ENCODE measurements at regions of chr6 and their contacts with region 1.

Region 1: GRCh38 chr6:138115877-138116660 is 8.8 kb upstream of the PERP start:
- DNase-seq: no peak
- ATAC-seq: peak; percentile 93
- H3K4me3 ChIP-seq: no peak overlapping the region
- H3K27ac ChIP-seq: no peak overlapping the region
- H3K4me1 ChIP-seq: no peaks in the 10 kb centered on the region
- H3K27me3 ChIP-seq: peaks cover 2% of the 10 kb centered on the region; the same call in 1 of the 2 replicates
- CTCF ChIP-seq: peak; percentile 78

Region 2: DNA sequence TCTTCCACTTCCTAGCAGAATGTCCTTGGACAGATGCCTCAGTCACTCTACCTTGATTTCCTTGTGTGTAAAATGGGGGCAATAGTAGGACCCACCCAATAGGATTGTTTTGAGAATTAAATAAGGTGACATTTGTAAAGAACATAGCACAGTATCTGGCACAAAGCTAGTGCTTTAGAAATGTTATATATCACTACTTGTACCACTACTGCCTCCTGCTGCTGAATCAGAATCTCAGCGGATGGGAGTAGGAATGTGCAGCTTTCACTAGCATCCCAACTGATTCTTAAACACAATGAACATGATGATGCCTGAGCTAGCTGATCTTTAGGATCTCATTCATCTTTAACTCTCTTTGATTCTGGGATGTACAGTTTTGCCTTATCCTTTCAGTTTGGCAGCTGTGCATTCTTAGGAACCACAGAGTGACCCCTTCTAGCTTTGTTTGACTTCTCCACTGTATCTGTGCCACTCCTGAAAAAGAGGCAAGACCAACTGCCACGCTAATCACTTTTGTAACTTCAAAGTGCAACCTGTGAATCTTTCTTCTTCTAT is 95.0 kb after region 1 on chr6:
- CTCF ChIA-PET with region 1: no interaction called
- POLR2A ChIA-PET with region 1: no interaction called
- in situ Hi-C with region 1: no loop called
- intact Hi-C with region 1: loop called (anchors 5 kb)
- DNase-seq: no peak
- ATAC-seq: no peak
- H3K4me3 ChIP-seq: no peak overlapping the region
- H3K27ac ChIP-seq: no peak overlapping the region
- H3K4me1 ChIP-seq: no peaks in the 10 kb centered on the region
- H3K27me3 ChIP-seq: 0 out of 2 replicates have a peak, but pooled peaks cover 3% of the 10 kb centered on the region
- CTCF ChIP-seq: peak; percentile 34; the same call in 1 of the 2 replicates

Region 3: DNA sequence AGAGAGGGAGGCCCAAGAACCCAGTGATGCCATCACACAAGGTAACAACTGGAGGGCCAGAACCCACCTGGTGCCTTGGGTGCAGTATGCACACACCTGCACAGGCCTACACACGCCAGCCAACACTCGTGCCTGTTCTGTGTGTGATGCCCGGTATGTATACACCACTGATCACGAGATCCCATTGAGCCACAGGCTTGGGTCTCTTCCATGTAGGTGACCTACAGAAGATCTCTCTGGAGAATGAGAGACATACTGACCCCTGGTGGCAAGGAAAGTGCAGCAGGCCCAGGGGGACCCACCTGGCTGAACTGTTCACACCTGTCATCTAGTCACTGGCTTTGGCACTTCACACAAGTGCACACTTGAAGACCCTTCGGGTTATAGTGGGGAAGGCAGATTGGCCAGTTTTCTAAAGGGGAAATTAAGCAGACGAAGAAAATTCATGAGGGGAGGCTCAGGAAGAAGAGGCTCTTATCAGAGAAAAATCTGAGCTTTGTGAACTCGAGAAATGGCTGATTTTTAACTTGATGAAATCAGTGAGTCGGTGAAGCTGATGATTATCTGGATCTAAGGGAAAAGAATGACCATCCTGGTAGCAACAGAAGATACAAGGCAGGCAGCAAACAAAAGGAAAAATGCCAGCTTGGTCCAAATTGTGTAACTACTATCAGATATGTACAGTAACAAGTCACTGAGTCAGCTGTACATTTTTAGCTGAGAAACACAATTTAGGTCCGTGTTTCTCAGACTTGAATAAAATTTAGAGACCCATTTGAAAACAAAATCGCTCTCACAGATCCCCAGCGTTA is 171.3 kb after region 1 on chr6:
- CTCF ChIA-PET with region 1: no interaction called
- POLR2A ChIA-PET with region 1: no interaction called
- in situ Hi-C with region 1: no loop called
- intact Hi-C with region 1: loop called (anchors 5 kb)
- DNase-seq: peak; percentile 10
- ATAC-seq: peak; percentile 74
- H3K4me3 ChIP-seq: no peak overlapping the region
- H3K27ac ChIP-seq: no peak overlapping the region
- H3K4me1 ChIP-seq: no peaks in the 10 kb centered on the region
- H3K27me3 ChIP-seq: no peaks in the 10 kb centered on the region
- CTCF ChIP-seq: peak; percentile 79

Region 4: DNA sequence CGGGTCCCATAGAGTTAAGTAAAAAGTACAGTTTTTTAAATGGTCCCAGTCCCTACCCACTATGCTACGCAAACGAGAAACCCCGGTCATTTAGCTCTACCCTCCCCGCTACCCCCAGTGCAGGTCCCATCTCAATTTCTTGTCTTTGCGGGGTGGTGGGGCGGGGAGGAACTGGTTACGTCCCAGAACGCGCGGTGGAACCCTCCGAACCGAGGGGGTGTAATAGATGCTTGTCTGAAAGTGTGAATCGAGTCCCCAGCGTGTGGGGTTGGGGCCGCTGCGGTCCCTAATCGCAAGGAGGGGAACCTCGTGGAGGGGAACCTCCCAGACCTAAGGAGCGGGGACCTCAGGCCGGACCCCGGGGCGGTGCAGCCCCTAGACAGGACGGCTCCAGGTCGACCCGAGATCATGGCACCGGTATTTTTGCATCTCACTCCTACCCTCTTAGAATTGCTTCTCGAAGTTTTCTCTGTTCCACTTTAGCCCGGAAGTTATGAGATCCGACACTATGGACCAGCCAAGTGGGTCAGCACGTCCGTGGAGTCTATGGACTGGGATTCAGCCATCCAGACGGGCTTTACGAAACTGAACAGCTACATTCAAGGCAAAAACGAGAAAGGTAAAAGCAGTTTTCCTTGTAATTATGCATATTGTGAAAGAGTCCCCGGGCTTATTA is 288.7 kb after region 1 on chr6:
- CTCF ChIA-PET with region 1: interaction called, 5 read pairs
- POLR2A ChIA-PET with region 1: no interaction called
- in situ Hi-C with region 1: no loop called
- intact Hi-C with region 1: loop called (anchors 5 kb)
- DNase-seq: no peak
- ATAC-seq: no peak; the same call in 1 of the 2 replicates
- H3K4me3 ChIP-seq: peak overlapping the region; percentile 79 to 92
- H3K27ac ChIP-seq: peak overlapping the region; percentile 81
- H3K4me1 ChIP-seq: peaks cover 6% of the 10 kb centered on the region
- H3K27me3 ChIP-seq: no peaks in the 10 kb centered on the region
- CTCF ChIP-seq: no peak

Region 5: DNA sequence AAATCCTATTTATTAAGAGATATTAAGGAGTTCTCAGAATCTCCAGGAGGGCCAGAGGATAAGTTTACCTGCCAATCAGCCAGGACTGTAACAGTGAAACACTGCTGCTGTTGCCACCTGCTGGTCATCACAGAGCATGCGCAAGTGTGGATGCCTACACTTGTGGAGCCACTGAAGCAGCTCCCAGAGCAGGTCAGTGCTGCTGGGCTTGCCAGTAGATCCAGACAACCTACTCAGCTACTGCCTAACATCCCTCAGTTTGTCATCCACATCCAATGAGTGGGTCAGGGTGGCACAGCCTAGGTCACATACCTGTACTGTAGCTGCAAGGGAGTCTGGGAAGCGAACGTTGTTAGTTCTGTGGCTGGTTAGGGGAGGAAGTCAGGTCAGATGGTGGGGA is 401.6 kb after region 1 on chr6:
- CTCF ChIA-PET with region 1: no interaction called
- POLR2A ChIA-PET with region 1: no interaction called
- in situ Hi-C with region 1: no loop called
- intact Hi-C with region 1: loop called (anchors 10 kb)
- DNase-seq: no peak
- ATAC-seq: peak; percentile 67; the same call in 1 of the 2 replicates
- H3K4me3 ChIP-seq: no peak overlapping the region
- H3K27ac ChIP-seq: no peak overlapping the region
- H3K4me1 ChIP-seq: no peaks in the 10 kb centered on the region
- H3K27me3 ChIP-seq: no peaks in the 10 kb centered on the region
- CTCF ChIP-seq: peak; percentile 62

Region 6: GRCh38 chr6:138588805-138589434 is 472.9 kb after region 1 on chr6:
- CTCF ChIA-PET with region 1: no interaction called
- POLR2A ChIA-PET with region 1: no interaction called
- in situ Hi-C with region 1: no loop called
- intact Hi-C with region 1: loop called (anchors 10 kb)
- DNase-seq: peak; percentile 74
- ATAC-seq: peak; percentile 50
- H3K4me3 ChIP-seq: no peak overlapping the region
- H3K27ac ChIP-seq: no peak overlapping the region
- H3K4me1 ChIP-seq: peaks cover 24% of the 10 kb centered on the region
- H3K27me3 ChIP-seq: no peaks in the 10 kb centered on the region
- CTCF ChIP-seq: peak; percentile 93

Region 7: GRCh38 chr6:138765896-138766655 is 650.0 kb after region 1 on chr6:
- CTCF ChIA-PET with region 1: interaction called, 5 read pairs
- POLR2A ChIA-PET with region 1: no interaction called
- in situ Hi-C with region 1: no loop called
- intact Hi-C with region 1: loop called (anchors 10 kb)
- DNase-seq: peak; percentile 22
- ATAC-seq: no peak
- H3K4me3 ChIP-seq: no peak overlapping the region
- H3K27ac ChIP-seq: no peak overlapping the region
- H3K4me1 ChIP-seq: no peaks in the 10 kb centered on the region
- H3K27me3 ChIP-seq: no peaks in the 10 kb centered on the region
- CTCF ChIP-seq: peak; percentile 70; the same call in 1 of the 2 replicates

Measured in Panc1 (cell line).